Left cardiac atrium (tissue), 4 donors: ENCODE measurements at regions of chr19 and their contacts with region 1.

Region 1: DNA sequence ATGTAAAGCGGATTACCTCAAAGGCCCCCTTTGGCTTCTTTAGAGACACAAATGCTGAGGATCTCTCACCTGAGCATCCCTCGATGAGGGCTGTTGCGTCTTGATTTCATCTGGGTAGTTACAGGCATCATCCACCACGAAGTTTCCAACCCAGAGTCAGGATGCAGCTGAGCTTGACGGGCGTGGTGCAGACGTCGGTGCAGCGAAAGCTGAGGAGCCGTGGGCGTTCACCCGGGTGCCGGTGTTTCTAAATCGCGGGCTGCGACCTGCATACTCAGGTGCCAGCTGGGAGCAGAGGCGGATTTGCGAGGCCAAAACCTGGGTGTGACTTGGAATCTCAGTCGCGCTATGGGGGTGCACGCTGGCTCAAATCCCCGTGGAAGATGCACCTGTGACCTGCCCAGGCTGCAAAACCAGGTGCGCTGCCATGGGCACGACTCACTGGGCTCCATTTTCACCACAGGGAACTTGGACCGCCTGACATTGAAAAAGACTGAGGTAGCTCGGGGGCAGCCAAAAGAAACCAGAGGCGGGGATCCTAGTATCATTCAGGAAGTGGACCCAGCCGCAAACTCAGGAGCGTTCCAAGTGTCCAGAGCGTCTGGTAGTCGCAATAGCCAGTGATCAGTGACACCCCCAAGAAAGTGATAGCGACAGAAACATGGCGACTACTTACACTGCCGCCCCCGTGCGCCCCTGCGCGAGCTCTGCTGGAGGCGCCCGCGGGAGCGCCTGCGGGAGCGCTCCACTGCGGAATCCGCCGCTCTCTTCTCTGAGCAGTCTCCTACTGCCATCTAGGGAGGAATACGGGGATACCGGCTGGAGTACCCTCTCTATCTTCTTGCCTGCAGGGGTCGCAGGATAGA is 36.4 kb upstream of the IGFL4 start:
- DNase-seq: peak; percentile 38
- ATAC-seq: peak; percentile 84 to 91

Region 2: DNA sequence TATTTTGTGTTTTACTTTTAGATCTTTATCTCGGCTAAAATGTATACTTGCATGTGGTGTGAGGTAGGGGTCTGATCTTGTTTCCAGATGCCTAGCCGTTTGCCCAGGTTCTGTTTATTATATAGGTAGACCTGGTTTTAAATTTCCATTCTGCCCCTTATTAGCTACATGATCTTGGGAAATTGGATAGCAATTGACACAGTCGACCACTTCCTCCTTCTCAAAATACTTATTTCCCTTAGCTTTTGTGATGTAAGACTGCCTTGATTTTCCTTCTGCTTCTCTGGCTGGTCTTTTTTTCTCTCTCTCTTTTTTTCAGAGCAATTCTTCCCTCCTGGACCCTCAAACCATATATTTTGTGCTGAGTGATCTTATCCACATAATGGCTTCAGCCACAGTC is 51.3 kb before region 1 on chr19:
- intact Hi-C with region 1: loop called in 1 of 2 experiments (anchors 5 kb)
- DNase-seq: no peak
- ATAC-seq: no peak

Region 3: GRCh38 chr19:46186101-46187100 is 109.2 kb after region 1 on chr19:
- intact Hi-C with region 1: loop called (anchors 2 to 5 kb)
- DNase-seq: no peak
- ATAC-seq: peak; percentile 38 to 51

Region 4: GRCh38 chr19:46192992-46193650 is 115.9 kb after region 1 on chr19:
- intact Hi-C with region 1: loop called (anchors 2 to 5 kb)
- DNase-seq: peak; percentile 51
- ATAC-seq: peak in 1 of 2 donors; percentile 69

Region 5: DNA sequence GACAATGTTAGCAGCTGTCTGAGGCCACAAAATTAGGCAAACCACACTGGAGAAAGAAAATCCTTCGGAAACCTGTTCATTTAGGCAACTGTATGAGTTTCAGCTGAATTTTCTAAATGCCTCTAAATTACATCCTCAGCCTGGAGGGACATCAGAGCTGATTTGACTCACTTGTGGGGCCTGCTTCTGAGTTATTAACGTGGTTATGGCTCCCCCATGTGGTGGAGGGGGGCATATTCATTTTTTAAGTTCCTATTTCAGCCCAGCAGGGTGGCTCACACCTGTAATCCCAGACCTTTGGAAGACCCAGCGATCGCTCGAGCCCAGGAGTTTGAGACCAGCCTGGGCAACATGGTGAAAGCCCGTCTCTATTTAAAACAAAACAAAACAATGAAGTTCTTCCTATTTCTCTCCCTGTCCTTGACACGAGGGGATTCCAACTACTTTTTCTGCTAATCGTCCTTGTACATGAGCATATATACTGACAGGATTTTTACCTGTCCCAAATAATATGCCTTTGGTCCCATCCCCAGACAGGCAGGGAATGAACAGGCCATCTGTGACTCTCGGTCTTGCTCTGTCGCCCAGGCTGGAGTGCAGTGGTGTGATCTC is 188.1 kb after region 1 on chr19:
- intact Hi-C with region 1: loop called (anchors 1 to 10 kb)
- DNase-seq: peak; percentile 39
- ATAC-seq: peak; percentile 83 to 86